ENCODE measurements at regions of chr6 and their contacts with region 1.

Region 1: GRCh38 chr6:105263685-105264610 is 84.1 kb upstream of the POPDC3 start:
- DNase-seq: no peak
- ATAC-seq: no peak

Region 2: GRCh38 chr6:105136431-105137350 is 127.3 kb before region 1 on chr6:
- intact Hi-C with region 1: loop called (anchors 5 kb)
- DNase-seq: peak; percentile 78
- ATAC-seq: peak; percentile 85

Region 3: DNA sequence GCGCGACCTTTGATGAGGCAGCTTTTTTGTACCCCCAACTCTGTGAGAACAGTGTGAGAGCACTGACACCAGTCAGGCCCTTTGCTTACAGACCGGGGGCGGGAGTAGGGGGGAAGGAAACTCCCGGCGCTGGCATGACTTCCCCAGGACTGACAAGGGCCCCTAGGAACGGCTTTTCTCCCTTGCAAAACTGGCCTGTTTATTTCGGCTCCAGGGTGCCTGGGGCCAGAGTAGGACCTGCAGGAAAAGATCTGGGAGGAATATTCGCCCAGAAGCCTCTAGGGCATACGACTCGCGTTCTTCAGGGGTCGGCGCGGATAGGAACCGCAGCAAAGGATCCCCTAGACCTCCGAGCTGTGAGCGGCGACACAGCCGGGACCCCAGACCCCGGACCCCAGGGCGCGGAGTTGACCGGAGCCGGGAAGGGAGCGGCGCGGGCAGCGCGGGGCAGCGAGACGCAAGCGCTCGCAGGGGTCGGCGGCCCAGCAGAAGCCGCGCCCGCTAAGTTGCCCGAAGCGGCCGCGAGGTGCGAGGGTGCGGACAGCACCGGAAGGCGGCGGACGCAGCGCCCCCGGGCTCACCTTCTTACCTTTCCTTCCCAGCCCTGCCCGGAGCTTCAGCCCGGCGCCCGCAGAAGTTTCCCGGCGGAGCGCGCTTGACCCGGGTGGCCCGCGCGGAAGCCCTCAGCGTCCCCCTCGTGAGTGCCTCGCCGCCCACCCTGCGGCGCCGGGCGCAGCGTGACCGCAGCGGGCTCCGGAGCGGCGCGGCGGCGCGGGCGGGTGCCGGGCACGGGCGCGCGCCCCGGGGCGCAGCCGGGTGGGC is 84.5 kb before region 1 on chr6 and contains the start of gene POPDC3:
- intact Hi-C with region 1: loop called (anchors 5 kb)
- DNase-seq: no peak
- ATAC-seq: peak; percentile 71
- total RNA-seq, gene POPDC3: 47.8 TPM

Region 4: GRCh38 chr6:105226598-105227294 is 37.2 kb before region 1 on chr6:
- intact Hi-C with region 1: loop called (anchors 5 kb)
- DNase-seq: no peak
- ATAC-seq: peak; percentile 81

Region 5: DNA sequence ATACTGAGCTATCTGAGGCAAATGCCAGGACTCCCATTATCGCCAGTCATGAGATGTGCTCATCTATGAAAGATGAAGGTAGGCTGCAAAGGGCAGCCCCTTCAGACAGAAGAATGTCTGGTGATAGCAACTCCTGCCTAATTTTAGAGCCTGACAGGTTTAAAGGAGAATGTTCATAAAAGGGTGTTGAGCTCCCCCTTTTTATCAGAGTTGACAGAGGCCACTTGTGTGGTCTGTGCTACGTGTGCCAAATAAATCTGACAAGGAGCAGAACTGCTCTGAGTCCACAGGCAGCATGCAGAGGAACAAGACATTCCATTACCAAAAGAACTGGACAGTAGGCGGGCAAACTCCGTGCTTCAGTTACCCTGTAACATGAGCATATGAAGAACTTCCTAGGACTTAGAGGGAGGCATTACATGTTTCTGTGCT is 37.1 kb after region 1 on chr6:
- intact Hi-C with region 1: loop called (anchors 2 kb)
- DNase-seq: no peak
- ATAC-seq: peak; percentile 88

Measured in Right ventricle myocardium inferior (tissue), 1 donor.